ENCODE measurements at regions of chr6 and their contacts with region 1.

Region 1: GRCh38 chr6:28895134-28895812 is 28.5 kb downstream of the TRIM27 start:
- DNase-seq: peak; percentile 83 to 97 (median 90)
- ATAC-seq: peak; percentile 68
- H3K4me3 ChIP-seq: peak overlapping the region; percentile 79 to 80
- H3K4me3 Mint-ChIP-seq: peak overlapping the region; percentile 98
- H3K27ac ChIP-seq: peak overlapping the region; percentile 95 to 98
- H3K27ac Mint-ChIP-seq: peak overlapping the region; percentile 99
- H3K4me1 ChIP-seq: peaks cover 8% of the 10 kb centered on the region
- H3K4me1 Mint-ChIP-seq: peaks cover 18% of the 10 kb centered on the region
- H3K27me3 ChIP-seq: no peaks in the 10 kb centered on the region
- H3K27me3 Mint-ChIP-seq: no peaks in the 10 kb centered on the region
- CTCF ChIP-seq: no peak

Region 2: GRCh38 chr6:28880894-28881780 is 14.1 kb before region 1 on chr6:
- CTCF ChIA-PET with region 1: interaction called, 6 read pairs
- POLR2A ChIA-PET with region 1: interaction called, 60 read pairs
- intact Hi-C with region 1: loop called (anchors 1 kb)
- DNase-seq: peak; percentile 14 to 81 (median 53)
- ATAC-seq: no peak
- H3K4me3 ChIP-seq: peak overlapping the region; percentile 37 to 45
- H3K4me3 Mint-ChIP-seq: peak overlapping the region; percentile 86
- H3K27ac ChIP-seq: no peak overlapping the region
- H3K27ac Mint-ChIP-seq: peak overlapping the region; percentile 89
- H3K4me1 ChIP-seq: peaks cover 29% of the 10 kb centered on the region
- H3K4me1 Mint-ChIP-seq: peaks cover 52% of the 10 kb centered on the region
- H3K27me3 ChIP-seq: peaks cover 0 to 3% of the 10 kb centered on the region in 2 experiments
- H3K27me3 Mint-ChIP-seq: peaks cover 4% of the 10 kb centered on the region
- CTCF ChIP-seq: no peak

Region 3: GRCh38 chr6:28923318-28924102 is 28.2 kb after region 1 on chr6 and contains the start of gene TRIM27:
- CTCF ChIA-PET with region 1: interaction called, 5 read pairs
- POLR2A ChIA-PET with region 1: interaction called, 38 read pairs
- intact Hi-C with region 1: loop called (anchors 1 kb)
- DNase-seq: peak; percentile 51 to 90 (median 77)
- ATAC-seq: peak; percentile 81
- H3K4me3 ChIP-seq: peak within 1 kb of the TSS; percentile 84 to 97
- H3K4me3 Mint-ChIP-seq: peak within 1 kb of the TSS; percentile 88
- H3K27ac ChIP-seq: peak within 1 kb of the TSS; percentile 73 to 87
- H3K27ac Mint-ChIP-seq: peak within 1 kb of the TSS; percentile 94
- H3K4me1 ChIP-seq: peaks cover 33% of the 10 kb centered on the region
- H3K4me1 Mint-ChIP-seq: peaks cover 42% of the 10 kb centered on the region
- H3K27me3 ChIP-seq: no peaks in the 10 kb centered on the region
- H3K27me3 Mint-ChIP-seq: no peaks in the 10 kb centered on the region
- CTCF ChIP-seq: no peak
- total RNA-seq, gene TRIM27: 7.8 to 9.4 TPM

Region 4: DNA sequence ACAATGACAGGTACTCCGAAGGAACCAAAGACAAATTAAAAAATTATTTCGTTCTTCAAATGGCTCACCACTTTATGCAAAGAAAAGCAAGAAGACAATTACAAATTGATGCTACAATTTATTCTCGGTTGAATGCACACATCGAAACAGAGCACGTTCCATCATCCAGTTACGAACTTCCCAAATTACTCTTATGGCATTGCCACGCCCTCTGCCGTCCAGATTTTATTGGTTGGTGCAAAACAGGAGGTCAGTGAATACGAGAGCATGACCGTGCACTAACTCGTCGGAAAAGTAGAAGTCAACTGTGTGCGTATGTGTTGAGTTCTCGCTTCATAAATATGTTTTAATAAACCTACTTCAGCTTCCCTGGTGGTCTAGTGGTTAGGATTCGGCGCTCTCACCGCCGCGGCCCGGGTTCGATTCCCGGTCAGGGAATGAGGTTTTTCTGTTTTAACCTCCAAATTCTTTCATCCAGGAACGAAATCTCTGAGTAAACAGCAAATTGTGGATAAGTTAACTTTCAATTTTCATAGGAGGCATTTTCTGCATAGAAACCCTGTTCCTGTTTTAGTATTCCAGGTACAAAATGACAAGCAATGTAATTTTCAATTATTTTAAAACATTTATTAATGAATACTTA is 86.7 kb after region 1 on chr6:
- CTCF ChIA-PET with region 1: interaction called, 3 read pairs
- POLR2A ChIA-PET with region 1: no interaction called
- intact Hi-C with region 1: loop called (anchors 1 kb)
- DNase-seq: peak; percentile 43 to 89 (median 70)
- ATAC-seq: peak; percentile 69
- H3K4me3 ChIP-seq: peak overlapping the region; percentile 94 to 98
- H3K4me3 Mint-ChIP-seq: peak overlapping the region; percentile 89
- H3K27ac ChIP-seq: peak overlapping the region; percentile 14 to 59
- H3K27ac Mint-ChIP-seq: peak overlapping the region; percentile 91
- H3K4me1 ChIP-seq: peaks cover 17% of the 10 kb centered on the region
- H3K4me1 Mint-ChIP-seq: peaks cover 59% of the 10 kb centered on the region
- H3K27me3 ChIP-seq: peaks cover 0 to 6% of the 10 kb centered on the region in 2 experiments
- H3K27me3 Mint-ChIP-seq: peaks cover 34% of the 10 kb centered on the region
- CTCF ChIP-seq: no peak

Region 5: DNA sequence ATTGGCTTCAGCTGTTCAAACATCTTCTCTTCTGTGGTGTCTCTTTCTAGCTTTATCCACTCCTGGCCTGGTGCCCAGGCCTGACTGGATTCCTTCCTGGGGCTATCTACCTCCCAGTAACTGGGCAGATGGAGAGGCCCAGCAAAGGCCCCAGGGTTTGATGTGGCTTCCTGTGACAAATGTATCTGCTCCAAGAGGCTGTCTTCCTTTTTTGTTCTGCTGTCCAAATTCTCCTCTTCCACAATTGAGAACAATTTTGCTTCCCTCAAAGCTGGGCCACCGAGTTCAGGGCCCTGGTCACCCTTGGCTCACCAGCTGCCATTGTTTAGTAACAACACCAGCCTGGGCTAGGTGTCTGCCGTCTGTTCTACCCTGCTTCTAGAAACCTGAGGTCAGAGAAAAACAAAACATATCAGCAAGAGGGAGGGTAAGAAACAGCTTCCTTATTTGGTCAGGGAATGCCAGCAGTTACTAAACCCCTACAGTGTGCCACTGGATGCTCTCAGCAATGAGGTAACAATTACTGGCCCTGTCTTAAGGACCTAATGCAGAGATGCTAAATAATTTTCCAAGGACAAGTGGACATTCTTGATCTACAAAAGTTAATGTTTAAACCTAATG is 781.8 kb after region 1 on chr6:
- CTCF ChIA-PET with region 1: no interaction called
- POLR2A ChIA-PET with region 1: no interaction called
- intact Hi-C with region 1: no loop called
- DNase-seq: no peak
- ATAC-seq: no peak
- H3K4me3 ChIP-seq: no peak overlapping the region
- H3K4me3 Mint-ChIP-seq: no peak overlapping the region
- H3K27ac ChIP-seq: no peak overlapping the region
- H3K27ac Mint-ChIP-seq: no peak overlapping the region
- H3K4me1 ChIP-seq: no peaks in the 10 kb centered on the region
- H3K4me1 Mint-ChIP-seq: peaks cover 4% of the 10 kb centered on the region
- H3K27me3 ChIP-seq: no peaks in the 10 kb centered on the region
- H3K27me3 Mint-ChIP-seq: peaks cover 11% of the 10 kb centered on the region
- CTCF ChIP-seq: no peak

Measured in CD8-positive, alpha-beta T cell (primary cell).